BJ (cell line): ENCODE measurements at regions of chr2 and their contacts with region 1.

Region 1: DNA sequence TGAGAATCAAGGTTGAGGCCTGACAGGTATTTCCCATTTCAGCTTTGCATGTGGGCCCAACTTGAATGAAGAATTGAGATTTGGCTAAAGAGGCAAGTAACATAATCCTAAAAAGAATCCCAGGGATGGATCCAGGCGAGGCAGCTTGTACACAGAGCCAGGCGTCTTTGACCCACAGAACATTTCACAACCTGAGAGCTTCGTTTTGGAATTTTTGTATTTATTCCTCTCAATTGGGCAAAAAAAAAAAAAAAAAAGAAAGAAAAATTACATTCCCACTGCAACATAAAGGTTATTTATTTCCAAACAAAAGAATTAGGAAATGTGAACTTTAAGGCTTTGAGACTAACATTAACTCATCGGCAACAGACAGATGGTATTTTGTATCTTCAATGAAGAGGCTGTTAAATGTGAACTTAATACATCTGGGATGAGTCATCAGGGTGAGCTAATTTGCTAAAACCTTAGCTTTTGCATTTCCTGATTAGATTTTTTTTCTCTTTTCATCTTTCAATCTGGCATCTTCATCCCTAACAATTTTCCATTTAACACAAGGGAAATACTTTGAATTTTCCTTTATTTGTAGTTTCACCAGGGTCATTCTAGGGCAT is 478.5 kb upstream of the TNP1 start:
- DNase-seq: peak; percentile 89
- H3K4me3 ChIP-seq: no peak overlapping the region
- H3K27me3 ChIP-seq: no peaks in the 10 kb centered on the region
- CTCF ChIP-seq: no peak

Region 2: DNA sequence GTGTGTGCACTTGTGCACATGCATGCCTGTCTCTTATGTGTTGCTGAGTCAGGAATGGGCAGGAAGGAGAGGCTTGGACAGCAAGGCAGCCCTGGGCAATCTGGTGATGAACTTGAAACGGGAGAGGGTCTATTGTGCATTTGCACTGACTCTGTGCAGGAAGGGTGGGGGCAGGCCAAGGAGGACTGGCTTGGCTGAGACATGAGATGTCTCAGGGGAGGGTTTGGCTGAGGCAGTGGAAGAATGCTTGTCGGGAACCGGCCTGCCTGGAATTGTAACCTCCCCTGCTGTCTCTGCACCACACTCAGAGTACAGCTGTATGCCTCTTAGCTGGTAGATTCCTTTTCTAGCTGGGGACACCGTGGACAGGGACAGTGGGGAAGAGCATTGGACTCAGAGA is 302.4 kb before region 1 on chr2:
- CTCF ChIA-PET with region 1: no interaction called
- POLR2A ChIA-PET with region 1: no interaction called
- DNase-seq: no peak
- H3K4me3 ChIP-seq: no peak overlapping the region
- H3K27me3 ChIP-seq: peaks cover 7% of the 10 kb centered on the region
- CTCF ChIP-seq: no peak

Region 3: DNA sequence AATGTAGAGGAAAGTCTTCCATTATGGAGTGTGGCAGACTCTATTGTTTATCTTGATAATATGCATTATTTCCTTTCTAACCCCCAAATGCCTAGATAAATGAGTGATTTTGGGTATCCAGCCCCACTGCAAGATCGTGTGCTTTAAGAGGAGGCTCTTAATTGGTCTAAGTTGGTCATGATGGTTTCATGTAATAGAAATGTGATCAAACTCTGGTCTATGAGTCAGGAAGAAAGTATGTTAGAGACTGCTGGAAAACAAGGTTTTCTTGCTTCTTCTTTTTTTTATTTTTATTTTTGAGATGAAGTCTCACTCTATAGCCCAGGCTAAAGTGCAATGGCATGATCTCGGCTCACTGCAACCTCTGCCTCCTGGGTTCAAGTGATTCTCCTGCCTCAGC is 134.1 kb before region 1 on chr2:
- CTCF ChIA-PET with region 1: no interaction called
- POLR2A ChIA-PET with region 1: no interaction called
- DNase-seq: peak; percentile 25
- H3K4me3 ChIP-seq: no peak overlapping the region
- H3K27me3 ChIP-seq: no peaks in the 10 kb centered on the region
- CTCF ChIP-seq: no peak

Region 4: GRCh38 chr2:217360781-217361482 is 22.5 kb after region 1 on chr2:
- CTCF ChIA-PET with region 1: interaction called, 3 read pairs
- POLR2A ChIA-PET with region 1: interaction called, 10 read pairs
- DNase-seq: peak; percentile 87
- H3K4me3 ChIP-seq: no peak overlapping the region
- H3K27me3 ChIP-seq: no peaks in the 10 kb centered on the region
- CTCF ChIP-seq: no peak